Posterior cingulate gyrus (tissue), 11 donors: ENCODE measurements at regions of chr13 and their contacts with region 1.

Region 1: DNA sequence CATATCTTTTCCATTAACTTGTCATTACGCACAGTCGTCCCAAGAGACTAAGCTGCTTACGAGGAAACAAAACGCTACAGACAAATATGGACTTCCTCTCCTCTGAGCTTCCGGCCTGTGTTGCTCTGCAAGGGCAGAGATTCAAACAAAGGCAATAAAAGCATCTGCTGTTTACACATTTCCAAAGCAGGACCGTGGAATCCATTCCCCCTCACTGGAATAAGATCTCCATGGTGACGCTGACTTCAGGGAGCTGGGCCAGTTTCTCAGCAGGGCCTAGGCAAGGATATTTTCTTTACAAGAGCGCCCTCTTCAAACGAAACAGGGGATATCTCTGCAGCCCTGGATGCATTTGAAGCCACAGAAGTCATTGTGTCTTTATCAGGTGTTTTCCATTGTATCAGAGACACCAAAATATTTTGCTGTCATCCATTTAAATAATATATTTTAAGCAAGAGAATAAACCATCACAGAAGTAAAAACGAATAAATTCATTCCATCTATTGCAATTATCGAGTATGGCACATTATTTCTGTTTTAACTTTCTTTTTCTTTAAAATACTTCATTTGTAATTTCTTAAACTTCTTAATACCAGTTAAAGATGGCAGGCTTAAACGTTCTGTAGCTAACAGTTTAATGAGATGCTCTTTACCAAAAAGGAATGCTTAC is 177.5 kb downstream of the DCLK1 start:
- DNase-seq: peak; percentile 59 to 94 (median 79)

Region 2: GRCh38 chr13:35630551-35631275 is 323.0 kb before region 1 on chr13:
- intact Hi-C with region 1: loop called (anchors 2 kb)
- DNase-seq: no peak

Region 3: DNA sequence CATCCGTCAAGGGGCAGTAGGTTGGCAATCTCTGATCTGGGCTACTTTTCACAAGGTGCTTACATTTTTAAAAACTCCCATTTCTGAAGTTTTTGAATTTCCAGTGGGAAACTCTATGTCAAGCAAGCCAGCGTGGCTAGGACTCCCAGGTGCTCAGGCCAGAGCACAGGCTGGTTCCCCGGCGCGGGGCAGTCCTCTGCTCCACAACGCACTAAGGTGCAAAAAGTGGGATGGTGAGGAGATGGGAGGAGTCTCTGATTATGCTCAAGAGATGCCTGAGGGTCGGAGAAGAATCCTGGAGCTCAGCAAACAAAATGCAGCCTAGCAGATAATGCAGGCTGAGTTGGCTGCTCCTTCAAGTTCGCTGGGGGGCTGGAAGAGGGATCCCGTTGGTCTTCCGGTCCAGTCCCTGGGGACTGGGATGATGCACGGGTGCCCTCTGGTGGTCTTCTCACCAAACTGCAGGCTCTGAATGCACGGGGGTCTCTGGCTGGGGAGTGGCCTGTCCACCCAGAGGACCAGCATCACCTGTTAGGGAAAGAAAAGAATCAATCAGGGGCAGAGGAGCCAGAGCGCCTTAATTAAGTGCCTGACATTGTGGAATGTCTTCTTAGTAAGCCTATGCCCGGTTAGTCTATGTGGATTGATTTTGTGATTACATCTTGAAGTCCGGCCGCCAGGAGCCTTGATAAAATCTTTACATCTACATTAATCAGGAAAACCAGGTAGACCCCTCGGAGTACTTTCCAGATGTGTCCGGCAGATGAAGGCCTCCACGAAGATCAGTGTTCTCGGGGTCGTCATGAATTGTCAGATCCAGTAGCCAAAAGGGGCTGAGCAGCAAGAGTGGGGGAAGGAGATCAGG is 232.8 kb before region 1 on chr13:
- intact Hi-C with region 1: loop called (anchors 5 kb)
- DNase-seq: peak; percentile 21 to 94 (median 70)

Region 4: GRCh38 chr13:35826622-35827254 is 126.9 kb before region 1 on chr13:
- intact Hi-C with region 1: no loop called
- DNase-seq: no peak

Region 5: GRCh38 chr13:35841060-35841521 is 112.6 kb before region 1 on chr13:
- intact Hi-C with region 1: loop called (anchors 5 kb)
- DNase-seq: peak in 2 of 10 donors; percentile 37 to 47

Region 6: DNA sequence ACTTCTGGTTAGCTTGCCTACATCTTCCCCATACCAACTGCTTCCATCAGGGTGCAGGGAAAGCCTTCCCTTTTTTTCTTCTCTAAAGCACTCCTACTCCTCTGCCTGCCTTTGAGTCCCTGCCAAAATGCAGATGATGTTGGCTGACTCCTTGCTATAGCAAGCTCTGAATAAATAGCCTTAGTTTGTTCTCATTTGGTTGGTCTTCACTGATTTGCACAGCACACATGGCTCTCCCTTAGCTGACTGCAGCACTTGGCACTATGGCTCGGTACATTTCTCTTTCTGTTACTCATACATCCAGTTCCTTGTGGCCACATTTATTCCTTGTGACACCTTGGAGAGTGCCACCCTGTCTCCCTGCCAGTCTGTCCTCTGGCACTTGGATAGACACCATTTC is 72.3 kb before region 1 on chr13:
- intact Hi-C with region 1: loop called (anchors 5 kb)
- DNase-seq: peak; percentile 30 to 93 (median 64)

Region 7: GRCh38 chr13:36543671-36544070 is 590.0 kb after region 1 on chr13:
- intact Hi-C with region 1: no loop called
- DNase-seq: no peak